Heart left ventricle (tissue), 16 donors: ENCODE measurements at regions of chr1 and their contacts with region 1.

Region 1: DNA sequence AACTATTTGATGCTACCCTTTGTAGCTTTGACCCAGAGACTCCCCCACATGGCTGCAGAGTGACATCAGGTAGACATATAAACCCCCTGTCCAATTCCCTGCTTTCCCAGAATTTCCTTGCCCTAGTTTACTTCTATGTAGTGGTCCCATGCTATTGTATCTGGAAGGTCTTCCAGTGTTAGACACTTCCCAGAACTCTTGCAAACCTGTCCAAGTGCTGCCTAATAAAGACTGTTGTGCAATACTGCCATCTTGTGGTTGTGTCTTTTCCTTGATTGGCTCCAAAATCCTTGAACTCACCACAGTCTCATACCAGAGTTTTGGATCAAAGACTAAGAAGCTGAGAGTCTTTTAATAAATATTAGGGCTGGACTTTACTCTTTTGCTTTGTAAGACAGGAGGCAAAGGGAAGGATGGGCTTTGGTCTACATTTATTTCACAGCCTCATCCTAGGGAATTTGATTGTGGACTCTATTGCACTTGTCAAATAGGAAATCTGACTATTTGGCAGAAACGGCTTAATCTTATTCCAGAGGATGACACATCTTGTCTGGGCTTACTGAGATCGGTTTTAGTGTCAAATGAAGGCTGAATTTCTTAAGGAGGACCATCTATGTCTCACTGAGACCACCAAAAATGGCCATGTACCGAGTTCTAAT is 169.9 kb downstream of the LRRC7 start:
- DNase-seq: peak in 1 of 5 donors; percentile 13
- ATAC-seq: peak; percentile 47 to 73 (median 60)
- H3K4me3 ChIP-seq: no peak overlapping the region
- H3K27ac ChIP-seq: no peak overlapping the region
- H3K4me1 ChIP-seq: no peaks in the 10 kb centered on the region
- H3K27me3 ChIP-seq: no peaks in the 10 kb centered on the region
- CTCF ChIP-seq: peak; percentile 42 to 71 (median 62)
- POLR2A ChIP-seq: no peak

Region 2: DNA sequence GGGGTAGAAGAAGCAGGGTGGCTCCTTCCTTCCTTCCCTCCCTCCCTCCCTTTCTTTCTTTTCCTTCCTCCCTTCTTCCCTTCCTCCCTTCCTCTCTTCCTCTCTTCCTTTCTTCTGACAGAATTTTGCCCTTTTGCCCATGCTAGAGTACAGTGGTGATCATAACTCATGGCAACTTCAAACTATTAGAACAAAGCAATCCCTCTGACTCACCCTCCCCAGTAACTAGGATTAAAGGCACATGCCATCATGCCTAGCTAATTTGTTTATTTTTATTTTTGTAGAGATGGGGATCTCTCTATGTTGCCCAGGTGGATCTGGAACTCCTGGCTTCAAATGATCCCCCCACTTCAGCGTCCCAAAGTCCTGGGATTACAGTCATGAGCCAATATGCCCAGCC is 1277.9 kb before region 1 on chr1:
- intact Hi-C with region 1: loop called in 1 of 10 experiments (anchors 10 kb)
- DNase-seq: no peak
- ATAC-seq: no peak
- H3K4me3 ChIP-seq: no peak overlapping the region
- H3K27ac ChIP-seq: no peak overlapping the region
- H3K4me1 ChIP-seq: no peaks in the 10 kb centered on the region
- H3K27me3 ChIP-seq: no peaks in the 10 kb centered on the region
- CTCF ChIP-seq: no peak
- POLR2A ChIP-seq: no peak

Region 3: DNA sequence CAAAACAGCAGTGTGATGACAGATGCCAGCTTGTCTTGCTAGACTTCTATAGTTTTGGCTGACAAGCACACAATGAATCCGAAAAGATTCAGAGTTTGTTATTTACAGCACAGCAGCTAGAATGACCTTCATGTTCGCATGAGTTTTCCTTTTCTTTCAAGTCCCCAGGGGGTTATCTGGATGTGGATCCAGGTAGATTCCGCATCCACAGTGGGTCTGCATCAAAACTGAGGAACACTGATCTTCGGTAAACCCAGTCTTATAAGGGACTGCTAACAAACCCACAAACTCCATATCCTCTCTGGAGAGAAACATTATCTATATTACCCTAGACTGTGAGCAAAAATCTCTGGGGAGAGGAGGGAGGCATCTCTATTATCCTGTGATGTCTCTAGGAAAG is 1171.7 kb before region 1 on chr1:
- intact Hi-C with region 1: loop called in 5 of 10 experiments (anchors 5 to 10 kb)
- DNase-seq: no peak
- ATAC-seq: no peak
- H3K4me3 ChIP-seq: no peak overlapping the region
- H3K27ac ChIP-seq: no peak overlapping the region
- H3K4me1 ChIP-seq: no peaks in the 10 kb centered on the region
- H3K27me3 ChIP-seq: peaks cover 0 to 3% (median 0%) of the 10 kb centered on the region in 9 donors
- CTCF ChIP-seq: no peak
- POLR2A ChIP-seq: no peak

Region 4: GRCh38 chr1:68590473-68590872 is 1147.2 kb before region 1 on chr1:
- intact Hi-C with region 1: loop called in 2 of 10 experiments (anchors 10 kb)
- DNase-seq: no peak
- ATAC-seq: no peak
- H3K4me3 ChIP-seq: no peak overlapping the region
- H3K27ac ChIP-seq: no peak overlapping the region
- H3K4me1 ChIP-seq: no peaks in the 10 kb centered on the region
- H3K27me3 ChIP-seq: no peaks in the 10 kb centered on the region
- CTCF ChIP-seq: peak in 2 of 12 donors; percentile 13 to 16
- POLR2A ChIP-seq: no peak

Region 5: GRCh38 chr1:68819190-68819829 is 918.3 kb before region 1 on chr1:
- intact Hi-C with region 1: loop called in 1 of 10 experiments (anchors 10 kb)
- DNase-seq: no peak
- ATAC-seq: peak in 2 of 4 donors; percentile 30 to 50
- H3K4me3 ChIP-seq: no peak overlapping the region
- H3K27ac ChIP-seq: no peak overlapping the region
- H3K4me1 ChIP-seq: no peaks in the 10 kb centered on the region
- H3K27me3 ChIP-seq: no peaks in the 10 kb centered on the region
- CTCF ChIP-seq: peak in 11 of 12 donors; percentile 10 to 47 (median 36)
- POLR2A ChIP-seq: no peak